Colonic mucosa (tissue), 4 donors: ENCODE measurements at regions of chr12 and their contacts with region 1.

Region 1: DNA sequence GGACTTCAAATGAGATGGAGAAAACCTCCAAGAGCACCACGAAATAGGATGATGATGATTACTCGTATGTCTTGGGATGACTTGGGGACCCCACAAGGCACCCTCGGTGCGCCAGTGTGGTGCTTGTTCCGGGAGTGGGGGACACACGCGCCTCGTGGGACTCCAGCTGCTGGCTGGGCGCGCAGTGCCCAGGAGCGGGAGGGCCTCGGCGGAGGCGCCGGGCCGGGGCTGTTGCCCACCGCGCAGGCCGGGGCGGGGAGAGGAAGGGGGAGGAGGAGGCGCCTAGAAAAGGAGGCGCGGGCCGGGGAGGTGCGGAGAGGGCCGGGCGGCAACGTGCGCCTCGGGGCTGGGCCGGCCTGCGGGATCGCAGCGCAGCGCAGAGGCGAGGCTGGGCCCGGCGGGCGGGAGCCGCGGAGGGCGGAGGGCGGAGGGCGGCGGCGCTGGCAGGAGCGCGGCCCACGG is at the start of gene RFLNA:
- DNase-seq: peak; percentile 49
- H3K4me3 ChIP-seq: peak within 1 kb of the TSS; percentile 47
- H3K27ac ChIP-seq: no peak within 1 kb of the TSS
- H3K4me1 ChIP-seq: peaks cover 5% of the 10 kb centered on the region
- H3K27me3 ChIP-seq: no peaks in the 10 kb centered on the region
- CTCF ChIP-seq: no peak
- total RNA-seq, gene RFLNA: 22.4 to 44.8 TPM

Region 2: GRCh38 chr12:124152731-124153130 is 142.1 kb before region 1 on chr12:
- intact Hi-C with region 1: no loop called
- DNase-seq: no peak
- H3K4me3 ChIP-seq: no peak overlapping the region
- H3K27ac ChIP-seq: no peak overlapping the region
- H3K4me1 ChIP-seq: no peaks in the 10 kb centered on the region
- H3K27me3 ChIP-seq: no peaks in the 10 kb centered on the region
- CTCF ChIP-seq: no peak

Region 3: DNA sequence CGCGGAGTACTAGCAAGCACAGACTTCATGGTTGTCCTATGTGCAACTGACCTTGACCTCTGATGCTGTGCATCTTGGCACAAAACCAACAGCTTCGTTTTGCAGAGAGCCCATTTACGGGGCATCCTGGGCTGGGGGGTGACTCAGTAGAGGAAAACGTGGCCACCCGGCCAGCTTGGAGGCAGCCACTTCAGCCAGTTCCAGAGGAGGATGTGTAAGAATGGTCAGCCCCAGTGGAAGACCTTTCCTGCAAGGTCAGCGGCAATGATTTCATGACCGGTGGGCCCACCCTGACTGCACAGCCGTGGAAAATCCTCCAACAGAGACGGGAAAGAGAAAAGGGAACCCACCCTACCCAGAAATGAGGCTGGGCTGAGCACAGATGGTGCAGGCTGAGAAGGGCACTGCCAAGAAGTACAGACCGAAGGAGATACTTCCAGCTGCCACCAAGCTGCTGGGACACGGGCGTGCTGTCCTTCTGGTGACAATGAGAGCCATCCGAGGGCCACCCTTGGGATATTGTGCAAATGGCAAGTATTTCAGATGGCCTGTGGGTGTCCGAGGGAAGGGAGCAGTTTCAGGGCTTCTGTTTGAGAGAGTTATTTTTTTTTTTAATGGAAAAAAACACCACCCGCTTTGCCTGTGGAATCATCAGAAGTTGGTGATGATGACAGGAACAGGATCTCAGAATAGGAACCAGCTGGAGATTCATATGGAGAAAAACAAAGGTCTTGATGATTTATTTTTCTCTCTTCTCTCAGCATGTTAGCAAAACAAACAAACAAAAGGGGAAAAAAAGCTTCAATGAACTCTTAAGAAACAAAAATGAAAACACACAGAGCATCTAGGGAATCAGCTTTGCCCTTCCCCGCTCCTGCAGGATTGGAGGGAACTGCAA is 120.1 kb before region 1 on chr12:
- intact Hi-C with region 1: loop called (anchors 5 kb)
- DNase-seq: no peak
- H3K4me3 ChIP-seq: no peak overlapping the region
- H3K27ac ChIP-seq: no peak overlapping the region
- H3K4me1 ChIP-seq: no peaks in the 10 kb centered on the region
- H3K27me3 ChIP-seq: no peaks in the 10 kb centered on the region
- CTCF ChIP-seq: no peak

Region 4: DNA sequence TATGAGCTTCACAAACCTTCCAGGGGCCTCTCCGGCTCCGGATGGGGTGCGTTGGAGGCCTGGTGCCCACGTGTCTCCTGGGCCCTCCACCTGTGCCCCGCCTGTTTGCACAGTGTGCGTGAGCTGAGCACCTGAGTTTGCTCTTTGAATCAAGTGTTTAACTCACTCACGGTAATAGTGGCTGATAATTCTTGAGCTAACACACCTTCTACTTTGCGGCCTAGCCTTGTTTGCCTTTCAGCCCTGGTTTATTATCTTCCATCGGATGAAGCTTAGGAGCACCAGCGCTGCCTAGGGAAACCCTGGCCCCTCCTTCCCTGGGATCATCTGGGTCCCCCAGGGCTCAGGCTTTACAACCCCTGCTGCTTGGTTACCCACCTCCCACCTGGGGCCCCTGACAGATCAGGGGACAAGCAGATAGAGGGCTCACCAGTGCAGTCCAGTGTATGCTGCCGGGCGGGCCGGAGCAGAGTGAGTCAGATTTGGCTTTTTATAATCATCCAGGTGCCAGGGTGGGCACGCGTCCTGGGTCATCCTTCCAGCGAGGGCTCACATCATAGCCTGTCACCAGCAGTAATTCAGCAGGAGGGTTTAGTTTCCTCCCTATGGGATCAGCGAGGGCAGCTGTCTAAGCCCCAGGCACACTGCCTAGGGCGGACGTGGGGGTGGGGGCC is 62.7 kb before region 1 on chr12:
- intact Hi-C with region 1: no loop called
- DNase-seq: peak; percentile 78
- H3K4me3 ChIP-seq: no peak overlapping the region
- H3K27ac ChIP-seq: peak overlapping the region; percentile 49
- H3K4me1 ChIP-seq: peaks cover 3% of the 10 kb centered on the region
- H3K27me3 ChIP-seq: no peaks in the 10 kb centered on the region
- CTCF ChIP-seq: no peak